Heart right ventricle (tissue), 16 donors: ENCODE measurements at regions of chr1 and their contacts with region 1.

Region 1: GRCh38 chr1:67760030-67760821 is 73.0 kb downstream of the GNG12 start:
- DNase-seq: peak; percentile 26 to 66
- ATAC-seq: peak; percentile 56 to 82 (median 72)
- H3K4me3 ChIP-seq: no peak overlapping the region
- H3K27ac ChIP-seq: peak overlapping the region in 4 of 10 donors; percentile 29 to 42 (median 35)
- H3K4me1 ChIP-seq: peaks cover 0 to 31% (median 16%) of the 10 kb centered on the region in 9 donors
- H3K27me3 ChIP-seq: no peaks in the 10 kb centered on the region
- CTCF ChIP-seq: peak; percentile 64 to 96 (median 89)

Region 2: DNA sequence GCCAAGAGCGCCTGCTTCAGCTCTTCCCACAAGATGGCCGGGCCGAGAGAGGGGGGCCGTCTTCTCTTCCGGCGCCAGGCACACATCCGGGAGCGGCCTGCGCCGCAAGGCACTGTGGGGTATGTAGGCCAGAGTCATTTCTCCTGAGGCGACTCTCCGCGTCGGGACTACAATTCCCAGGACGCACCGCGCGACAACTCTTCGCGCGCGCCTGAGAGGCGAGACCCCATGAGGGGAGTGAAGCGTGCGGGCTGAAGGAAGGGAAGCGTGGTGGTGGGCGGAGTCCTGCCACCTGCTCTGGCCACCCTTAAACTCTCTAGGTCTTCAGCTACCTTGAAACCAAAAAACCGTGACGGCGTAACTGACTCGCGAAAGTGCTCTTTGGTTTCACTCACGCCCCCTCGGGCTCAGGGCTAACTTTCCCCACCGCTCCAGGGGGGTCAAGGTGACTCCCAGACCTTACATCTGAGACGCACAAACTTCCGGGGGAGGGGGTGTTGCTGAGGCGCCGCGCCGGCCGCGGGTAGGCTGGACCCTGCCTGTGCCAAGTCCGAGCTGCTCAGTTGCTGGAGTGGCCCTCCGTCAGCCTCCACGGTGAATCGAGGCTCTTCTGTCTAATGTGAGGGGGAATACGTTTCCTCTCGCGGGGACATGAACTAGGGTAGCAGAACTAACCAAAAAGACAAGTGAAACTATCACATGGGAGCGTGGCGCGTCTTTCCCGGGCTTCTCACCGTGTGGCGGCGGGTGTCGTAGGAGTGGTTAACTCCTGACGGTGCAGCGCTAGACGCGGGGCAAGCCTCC is 329.7 kb before region 1 on chr1 and contains the start of gene SERBP1:
- intact Hi-C with region 1: no loop called
- DNase-seq: peak; percentile 95 to 96
- ATAC-seq: peak; percentile 98 to 99 (median 98)
- H3K4me3 ChIP-seq: peak within 1 kb of the TSS; percentile 67 to 88 (median 85)
- H3K27ac ChIP-seq: peak within 1 kb of the TSS; percentile 60 to 94 (median 90)
- H3K4me1 ChIP-seq: peaks cover 0 to 65% (median 37%) of the 10 kb centered on the region in 9 donors
- H3K27me3 ChIP-seq: no peaks in the 10 kb centered on the region
- CTCF ChIP-seq: no peak
- total RNA-seq, gene SERBP1: 121 to 153 (median 142) TPM

Region 3: GRCh38 chr1:67535474-67535873 is 224.8 kb before region 1 on chr1:
- intact Hi-C with region 1: loop called (anchors 1 to 5 kb)
- DNase-seq: peak; percentile 72 to 73
- ATAC-seq: peak in 7 of 8 donors; percentile 72 to 88 (median 79)
- H3K4me3 ChIP-seq: no peak overlapping the region
- H3K27ac ChIP-seq: no peak overlapping the region
- H3K4me1 ChIP-seq: peaks cover 0 to 14% (median 9%) of the 10 kb centered on the region in 9 donors
- H3K27me3 ChIP-seq: no peaks in the 10 kb centered on the region
- CTCF ChIP-seq: peak; percentile 63 to 93 (median 89)

Region 4: DNA sequence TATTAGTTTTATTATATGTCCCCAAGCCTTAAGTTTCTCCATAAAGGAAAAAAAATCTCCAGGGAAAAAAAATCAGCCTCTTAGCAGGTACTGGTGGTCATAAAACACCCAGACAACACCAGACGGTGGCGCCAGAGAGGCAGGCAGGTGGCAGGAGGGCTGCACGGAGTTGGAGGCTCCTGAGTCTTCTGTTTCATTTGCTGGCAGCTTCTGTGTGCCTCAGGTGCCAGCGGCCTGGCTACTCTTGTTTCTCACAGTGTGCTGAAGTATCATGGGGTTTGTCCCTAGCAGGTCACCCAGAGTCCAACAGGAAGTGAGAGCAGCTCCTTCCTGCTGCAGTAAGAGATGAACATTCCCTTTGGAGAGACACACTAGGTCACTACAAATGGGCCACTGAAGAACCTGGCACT is 198.5 kb before region 1 on chr1:
- intact Hi-C with region 1: loop called in 7 of 10 experiments (anchors 1 to 10 kb)
- DNase-seq: peak; percentile 92 to 93
- ATAC-seq: peak; percentile 69 to 91 (median 78)
- H3K4me3 ChIP-seq: no peak overlapping the region
- H3K27ac ChIP-seq: peak overlapping the region in 9 of 10 donors; percentile 10 to 64 (median 54)
- H3K4me1 ChIP-seq: peaks cover 0 to 42% (median 29%) of the 10 kb centered on the region in 9 donors
- H3K27me3 ChIP-seq: no peaks in the 10 kb centered on the region
- CTCF ChIP-seq: peak; percentile 76 to 92 (median 88)

Region 5: GRCh38 chr1:67791686-67792475 is 31.7 kb after region 1 on chr1:
- intact Hi-C with region 1: no loop called
- DNase-seq: no peak
- ATAC-seq: peak in 6 of 8 donors; percentile 37 to 87 (median 64)
- H3K4me3 ChIP-seq: no peak overlapping the region
- H3K27ac ChIP-seq: peak overlapping the region in 3 of 10 donors; percentile 6 to 62 (median 24)
- H3K4me1 ChIP-seq: peaks cover 0 to 67% (median 34%) of the 10 kb centered on the region in 9 donors
- H3K27me3 ChIP-seq: no peaks in the 10 kb centered on the region
- CTCF ChIP-seq: no peak

Region 6: DNA sequence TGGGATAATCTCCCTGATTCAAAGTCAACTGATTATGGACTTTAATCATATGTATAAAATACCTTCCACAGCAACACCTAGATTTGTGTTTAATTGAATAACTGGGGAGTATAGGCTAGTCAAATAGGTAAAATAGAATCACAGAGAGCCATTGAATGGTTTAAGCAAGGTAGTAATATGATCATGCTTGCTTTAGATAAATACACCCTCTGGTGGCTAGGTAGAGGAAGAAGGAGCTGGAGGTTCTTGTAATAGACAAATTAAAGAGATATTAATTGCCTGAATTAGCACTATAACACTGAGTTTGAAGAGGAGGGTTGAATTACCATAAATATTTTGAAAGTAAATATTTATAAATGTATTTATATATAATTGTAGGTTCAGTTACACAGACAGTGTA is 249.9 kb after region 1 on chr1:
- intact Hi-C with region 1: loop called in 2 of 10 experiments (anchors 10 kb)
- DNase-seq: no peak
- ATAC-seq: peak in 2 of 8 donors; percentile 58 to 64
- H3K4me3 ChIP-seq: no peak overlapping the region
- H3K27ac ChIP-seq: no peak overlapping the region
- H3K4me1 ChIP-seq: no peaks in the 10 kb centered on the region
- H3K27me3 ChIP-seq: no peaks in the 10 kb centered on the region
- CTCF ChIP-seq: peak in 8 of 9 donors; percentile 29 to 62 (median 46)

Region 7: GRCh38 chr1:68206848-68207689 is 446.8 kb after region 1 on chr1:
- intact Hi-C with region 1: no loop called
- DNase-seq: no peak
- ATAC-seq: peak in 6 of 8 donors; percentile 20 to 67 (median 52)
- H3K4me3 ChIP-seq: no peak overlapping the region
- H3K27ac ChIP-seq: peak overlapping the region in 6 of 10 donors; percentile 7 to 69 (median 24)
- H3K4me1 ChIP-seq: peaks cover 0 to 87% (median 52%) of the 10 kb centered on the region in 9 donors
- H3K27me3 ChIP-seq: no peaks in the 10 kb centered on the region
- CTCF ChIP-seq: no peak

Region 8: GRCh38 chr1:68321084-68321685 is 561.0 kb after region 1 on chr1:
- intact Hi-C with region 1: loop called in 1 of 10 experiments (anchors 10 kb)
- DNase-seq: peak; percentile 53 to 64
- ATAC-seq: peak; percentile 87 to 94 (median 91)
- H3K4me3 ChIP-seq: no peak overlapping the region
- H3K27ac ChIP-seq: no peak overlapping the region
- H3K4me1 ChIP-seq: peaks cover 0 to 14% (median 0%) of the 10 kb centered on the region in 9 donors
- H3K27me3 ChIP-seq: no peaks in the 10 kb centered on the region
- CTCF ChIP-seq: peak; percentile 26 to 84 (median 77)

Region 9: GRCh38 chr1:68346188-68346808 is 586.1 kb after region 1 on chr1:
- intact Hi-C with region 1: loop called in 1 of 10 experiments (anchors 10 kb)
- DNase-seq: no peak
- ATAC-seq: no peak
- H3K4me3 ChIP-seq: no peak overlapping the region
- H3K27ac ChIP-seq: no peak overlapping the region
- H3K4me1 ChIP-seq: peaks cover 0 to 7% (median 0%) of the 10 kb centered on the region in 9 donors
- H3K27me3 ChIP-seq: no peaks in the 10 kb centered on the region
- CTCF ChIP-seq: peak in 8 of 9 donors; percentile 30 to 68 (median 55)